ENCODE measurements at regions of chr7 and their contacts with region 1.

Region 1: GRCh38 chr7:105691733-105692564 is 110.7 kb upstream of the EFCAB10 start:
- DNase-seq: peak; percentile 84 to 95 (median 91)
- H3K4me3 ChIP-seq: peak overlapping the region; percentile 71 to 75
- H3K4me3 Mint-ChIP-seq: peak overlapping the region; percentile 91 to 98 (median 94)
- H3K27ac ChIP-seq: peak overlapping the region; percentile 89
- H3K27ac Mint-ChIP-seq: peak overlapping the region; percentile 96 to 100 (median 98)
- H3K4me1 ChIP-seq: peaks cover 44% of the 10 kb centered on the region
- H3K4me1 Mint-ChIP-seq: peaks cover 29 to 78% (median 57%) of the 10 kb centered on the region in 4 donors
- H3K27me3 ChIP-seq: no peaks in the 10 kb centered on the region
- H3K27me3 Mint-ChIP-seq: no peaks in the 10 kb centered on the region

Region 2: GRCh38 chr7:105531792-105532671 is 159.9 kb before region 1 on chr7 and contains the start of gene RINT1:
- CTCF ChIA-PET with region 1: no interaction called
- POLR2A ChIA-PET with region 1: interaction called, 7 read pairs
- intact Hi-C with region 1: loop called (anchors 5 kb)
- DNase-seq: peak; percentile 86 to 88 (median 87)
- H3K4me3 ChIP-seq: peak within 1 kb of the TSS; percentile 93 to 94
- H3K4me3 Mint-ChIP-seq: peak within 1 kb of the TSS; percentile 85 to 98 (median 92)
- H3K27ac ChIP-seq: peak within 1 kb of the TSS; percentile 77
- H3K27ac Mint-ChIP-seq: peak within 1 kb of the TSS; percentile 73 to 98 (median 97)
- H3K4me1 ChIP-seq: peaks cover 23% of the 10 kb centered on the region
- H3K4me1 Mint-ChIP-seq: peaks cover 16 to 50% (median 30%) of the 10 kb centered on the region in 4 donors
- H3K27me3 ChIP-seq: no peaks in the 10 kb centered on the region
- H3K27me3 Mint-ChIP-seq: no peaks in the 10 kb centered on the region
- total RNA-seq, gene RINT1: 25.7 to 26.5 TPM

Region 3: DNA sequence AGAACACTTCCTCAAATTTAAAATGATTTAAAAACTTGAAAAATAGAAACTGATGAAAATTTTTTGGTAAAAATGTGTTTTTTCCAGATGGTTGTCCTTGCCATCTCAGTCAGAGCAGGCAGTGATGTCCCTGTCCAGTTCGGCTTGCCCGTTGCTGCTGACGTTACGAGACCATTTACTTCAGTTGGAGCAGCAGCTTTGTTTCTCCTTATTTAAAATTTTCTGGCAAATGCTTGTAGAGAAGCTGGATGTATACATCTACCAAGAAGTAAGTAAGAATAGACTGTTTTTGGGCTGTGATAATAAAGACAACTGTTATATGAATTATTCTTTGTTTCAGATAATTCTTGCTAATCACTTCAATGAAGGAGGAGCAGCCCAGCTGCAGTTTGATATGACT is 126.8 kb before region 1 on chr7:
- CTCF ChIA-PET with region 1: no interaction called
- POLR2A ChIA-PET with region 1: no interaction called
- intact Hi-C with region 1: no loop called
- DNase-seq: no peak
- H3K4me3 ChIP-seq: no peak overlapping the region
- H3K4me3 Mint-ChIP-seq: no peak overlapping the region
- H3K27ac ChIP-seq: no peak overlapping the region
- H3K27ac Mint-ChIP-seq: no peak overlapping the region
- H3K4me1 ChIP-seq: no peaks in the 10 kb centered on the region
- H3K4me1 Mint-ChIP-seq: peaks cover 0 to 1% (median 0%) of the 10 kb centered on the region in 4 donors
- H3K27me3 ChIP-seq: no peaks in the 10 kb centered on the region
- H3K27me3 Mint-ChIP-seq: no peaks in the 10 kb centered on the region

Region 4: GRCh38 chr7:105678811-105679495 is 13.0 kb before region 1 on chr7:
- CTCF ChIA-PET with region 1: interaction called, 14 read pairs
- POLR2A ChIA-PET with region 1: interaction called, 113 read pairs
- intact Hi-C with region 1: loop called (anchors 1 kb)
- DNase-seq: peak in 2 of 5 donors; percentile 17 to 27
- H3K4me3 ChIP-seq: peak overlapping the region; percentile 12 to 27
- H3K4me3 Mint-ChIP-seq: peak overlapping the region; percentile 86 to 95 (median 92)
- H3K27ac ChIP-seq: peak overlapping the region; percentile 83
- H3K27ac Mint-ChIP-seq: peak overlapping the region; percentile 90 to 99 (median 96)
- H3K4me1 ChIP-seq: peaks cover 63% of the 10 kb centered on the region
- H3K4me1 Mint-ChIP-seq: peaks cover 61 to 94% (median 74%) of the 10 kb centered on the region in 4 donors
- H3K27me3 ChIP-seq: no peaks in the 10 kb centered on the region
- H3K27me3 Mint-ChIP-seq: no peaks in the 10 kb centered on the region

Region 5: DNA sequence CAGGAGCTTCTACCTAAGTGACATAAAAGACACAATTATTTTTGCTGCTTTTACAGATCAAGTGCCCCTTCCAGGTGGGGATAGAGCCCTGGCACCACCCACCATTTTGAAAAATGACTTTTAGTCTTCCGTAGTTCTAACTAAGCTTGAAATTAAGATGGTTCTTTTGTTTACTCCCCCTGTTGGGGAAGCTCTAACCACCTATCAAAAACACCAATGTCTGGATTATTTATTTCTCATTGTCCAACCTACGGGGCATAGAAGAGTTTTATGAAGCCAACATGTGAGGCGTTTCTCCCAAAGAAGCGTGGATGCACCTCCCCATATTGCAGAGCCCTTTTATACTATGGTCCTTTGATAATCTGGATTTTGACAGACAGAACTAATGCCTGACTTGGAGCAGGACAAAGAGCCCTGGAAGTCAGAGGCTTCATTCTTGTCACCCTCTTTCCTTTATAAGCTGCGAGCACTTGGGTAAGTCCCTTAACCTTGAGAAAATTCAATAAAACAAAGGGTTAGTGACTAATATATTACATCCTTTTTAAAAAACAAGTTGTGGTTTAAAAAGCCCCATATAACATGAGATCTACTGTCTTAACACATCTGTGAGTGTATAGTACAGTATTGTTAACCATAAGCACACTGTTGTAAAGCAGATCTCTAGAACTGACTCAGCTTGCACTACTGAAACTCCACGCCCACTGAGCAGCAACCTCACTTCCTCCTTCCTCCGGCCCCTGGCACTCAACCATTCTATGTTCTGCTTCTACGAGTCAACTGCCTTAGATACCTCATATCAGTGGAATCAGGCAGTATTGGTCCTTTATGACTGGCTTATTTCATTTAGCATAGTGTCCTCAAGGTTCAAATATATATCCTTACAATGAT is 117.0 kb after region 1 on chr7:
- CTCF ChIA-PET with region 1: no interaction called
- POLR2A ChIA-PET with region 1: interaction called, 4 read pairs
- intact Hi-C with region 1: loop called (anchors 5 kb)
- DNase-seq: peak; percentile 60 to 81 (median 62)
- H3K4me3 ChIP-seq: peak overlapping the region in 1 of 2 donors; percentile 30
- H3K4me3 Mint-ChIP-seq: peak overlapping the region; percentile 2 to 88 (median 55)
- H3K27ac ChIP-seq: peak overlapping the region; percentile 60
- H3K27ac Mint-ChIP-seq: peak overlapping the region; percentile 52 to 92 (median 80)
- H3K4me1 ChIP-seq: peaks cover 56% of the 10 kb centered on the region
- H3K4me1 Mint-ChIP-seq: peaks cover 45 to 65% (median 54%) of the 10 kb centered on the region in 4 donors
- H3K27me3 ChIP-seq: no peaks in the 10 kb centered on the region
- H3K27me3 Mint-ChIP-seq: no peaks in the 10 kb centered on the region

Region 6: GRCh38 chr7:105876091-105876963 is 184.4 kb after region 1 on chr7 and contains the start of gene ATXN7L1:
- CTCF ChIA-PET with region 1: interaction called, 4 read pairs
- POLR2A ChIA-PET with region 1: interaction called, 6 read pairs
- intact Hi-C with region 1: loop called (anchors 1 kb)
- DNase-seq: peak; percentile 85 to 90 (median 86)
- H3K4me3 ChIP-seq: peak within 1 kb of the TSS; percentile 78 to 92
- H3K4me3 Mint-ChIP-seq: peak within 1 kb of the TSS; percentile 95 to 100 (median 98)
- H3K27ac ChIP-seq: peak within 1 kb of the TSS; percentile 82
- H3K27ac Mint-ChIP-seq: peak within 1 kb of the TSS; percentile 83 to 99 (median 96)
- H3K4me1 ChIP-seq: peaks cover 52% of the 10 kb centered on the region
- H3K4me1 Mint-ChIP-seq: peaks cover 43 to 63% (median 51%) of the 10 kb centered on the region in 4 donors
- H3K27me3 ChIP-seq: no peaks in the 10 kb centered on the region
- H3K27me3 Mint-ChIP-seq: no peaks in the 10 kb centered on the region
- total RNA-seq, gene ATXN7L1: 60.4 to 62.2 TPM

Region 7: GRCh38 chr7:105963038-105963667 is 271.2 kb after region 1 on chr7 and contains the start of gene CDHR3:
- CTCF ChIA-PET with region 1: no interaction called
- POLR2A ChIA-PET with region 1: no interaction called
- intact Hi-C with region 1: no loop called
- DNase-seq: no peak
- H3K4me3 ChIP-seq: no peak within 1 kb of the TSS
- H3K4me3 Mint-ChIP-seq: no peak within 1 kb of the TSS
- H3K27ac ChIP-seq: no peak within 1 kb of the TSS
- H3K27ac Mint-ChIP-seq: peak within 1 kb of the TSS in 1 of 7 donors; percentile 71
- H3K4me1 ChIP-seq: no peaks in the 10 kb centered on the region
- H3K4me1 Mint-ChIP-seq: no peaks in the 10 kb centered on the region
- H3K27me3 ChIP-seq: no peaks in the 10 kb centered on the region
- H3K27me3 Mint-ChIP-seq: no peaks in the 10 kb centered on the region
- total RNA-seq, gene CDHR3: 11.3 to 12.1 TPM

Region 8: GRCh38 chr7:106041140-106041717 is 349.3 kb after region 1 on chr7:
- CTCF ChIA-PET with region 1: interaction called, 20 read pairs
- POLR2A ChIA-PET with region 1: interaction called, 4 read pairs
- intact Hi-C with region 1: loop called (anchors 2 kb)
- DNase-seq: peak in 2 of 5 donors; percentile 19 to 30
- H3K4me3 ChIP-seq: no peak overlapping the region
- H3K4me3 Mint-ChIP-seq: peak overlapping the region in 2 of 8 donors; percentile 6 to 59
- H3K27ac ChIP-seq: no peak overlapping the region
- H3K27ac Mint-ChIP-seq: peak overlapping the region in 4 of 7 donors; percentile 0 to 74 (median 30)
- H3K4me1 ChIP-seq: peaks cover 26% of the 10 kb centered on the region
- H3K4me1 Mint-ChIP-seq: peaks cover 15 to 32% (median 25%) of the 10 kb centered on the region in 4 donors
- H3K27me3 ChIP-seq: no peaks in the 10 kb centered on the region
- H3K27me3 Mint-ChIP-seq: peaks cover 2 to 6% of the 10 kb centered on the region in 2 donors